ENCODE measurements at regions of chr2 and their contacts with region 1.

Region 1: DNA sequence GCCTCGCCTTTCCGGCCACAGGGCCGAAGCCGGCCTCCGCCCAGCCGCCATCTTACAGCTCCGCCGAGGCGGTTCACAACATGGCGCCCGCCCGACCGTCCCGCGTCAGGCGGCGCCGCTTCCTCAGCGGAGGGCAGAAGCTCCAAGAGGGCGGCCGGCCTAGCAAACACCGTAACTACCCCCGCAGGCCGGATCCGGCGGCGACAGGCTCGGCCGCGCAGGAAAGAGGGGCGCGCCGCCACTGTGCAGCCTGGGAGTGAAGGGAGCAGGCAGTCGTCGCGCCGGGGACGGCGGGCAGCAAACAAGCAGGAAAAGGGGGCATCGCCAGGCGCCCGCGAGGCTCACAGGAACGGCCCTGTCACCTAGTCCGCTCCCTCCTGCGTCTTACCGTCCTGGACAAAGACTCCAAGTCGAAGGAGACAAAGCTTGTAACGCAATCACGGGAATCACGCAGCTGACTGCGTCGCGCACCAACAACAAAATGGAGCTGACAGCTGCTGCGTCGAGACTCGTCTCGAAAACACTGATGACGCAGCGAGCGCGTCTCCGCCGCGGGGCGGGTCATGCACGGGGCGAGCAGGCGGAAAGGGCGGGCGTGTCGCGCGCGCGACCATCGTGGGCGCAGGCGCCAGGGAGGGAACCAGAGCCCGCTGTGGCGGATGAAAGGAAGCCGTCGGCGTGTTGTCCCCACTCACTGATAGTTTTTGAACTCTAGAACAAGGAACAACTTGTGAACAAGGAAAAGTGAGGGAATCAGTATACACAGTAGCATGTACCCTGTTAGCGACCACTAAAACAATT is at the start of gene CLK1:
- DNase-seq: peak; percentile 98
- H3K4me3 ChIP-seq: peak within 1 kb of the TSS; percentile 98
- H3K27ac ChIP-seq: peak within 1 kb of the TSS; percentile 99
- H3K4me1 ChIP-seq: peaks cover 45% of the 10 kb centered on the region
- H3K27me3 ChIP-seq: no peaks in the 10 kb centered on the region
- total RNA-seq, gene CLK1: 32.4 and 52.7 TPM in 2 replicates

Region 2: GRCh38 chr2:199955339-199956261 is 908.8 kb before region 1 on chr2 and contains the starts of genes MAIP1 and TYW5:
- in situ Hi-C with region 1: loop called (anchors 25 kb)
- DNase-seq: peak; percentile 92
- H3K4me3 ChIP-seq: peak within 1 kb of the TSS; percentile 97
- H3K27ac ChIP-seq: peak within 1 kb of the TSS; percentile 90
- H3K4me1 ChIP-seq: peaks cover 20% of the 10 kb centered on the region
- H3K27me3 ChIP-seq: no peaks in the 10 kb centered on the region
- total RNA-seq, gene MAIP1: 7.2 and 15.5 TPM in 2 replicates
- total RNA-seq, gene TYW5: 5.3 and 6.6 TPM in 2 replicates

Measured in GM23248 (cell line).